Activated B cell treated with CpG ODN at 0.5 μM for 24 hours (primary cell): ENCODE measurements at regions of chr1 and their contacts with region 1.

Region 1: DNA sequence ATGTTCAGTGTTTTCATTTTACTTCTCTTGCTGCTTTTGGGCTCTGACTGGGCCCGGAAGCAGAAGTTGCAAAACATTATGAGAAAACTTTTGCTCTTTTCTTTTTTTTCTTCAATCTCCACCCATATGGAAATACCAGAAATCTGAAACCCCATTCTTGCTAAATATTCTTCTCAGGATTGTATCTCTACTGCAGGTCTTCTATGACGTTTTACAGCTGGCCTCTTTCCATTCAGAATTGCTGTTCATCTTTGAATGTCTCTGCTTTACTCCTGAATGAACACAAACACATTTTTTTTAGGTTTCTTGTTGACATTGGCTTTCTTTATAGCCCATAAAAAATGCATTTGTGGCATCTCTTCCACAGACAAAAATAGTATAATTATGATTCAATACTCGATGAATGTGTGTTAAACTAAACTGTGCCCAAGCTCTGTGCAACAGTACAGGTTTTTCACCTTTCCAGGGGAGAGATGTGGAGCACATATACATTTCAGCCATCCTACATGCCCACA is 18.8 kb downstream of the PTPRC start:
- DNase-seq: no peak
- ATAC-seq: peak; percentile 57
- H3K4me3 Mint-ChIP-seq: peak overlapping the region; percentile 56
- H3K27ac Mint-ChIP-seq: peak overlapping the region; percentile 84
- H3K4me1 Mint-ChIP-seq: peaks cover 78% of the 10 kb centered on the region
- H3K27me3 Mint-ChIP-seq: no peaks in the 10 kb centered on the region
- CTCF ChIP-seq: no peak

Region 2: GRCh38 chr1:198187973-198188588 is 469.5 kb before region 1 on chr1:
- CTCF ChIA-PET with region 1: no interaction called
- POLR2A ChIA-PET with region 1: no interaction called
- intact Hi-C with region 1: no loop called
- DNase-seq: no peak
- ATAC-seq: no peak
- H3K4me3 Mint-ChIP-seq: no peak overlapping the region
- H3K27ac Mint-ChIP-seq: no peak overlapping the region
- H3K4me1 Mint-ChIP-seq: peaks cover 65% of the 10 kb centered on the region
- H3K27me3 Mint-ChIP-seq: no peaks in the 10 kb centered on the region
- CTCF ChIP-seq: no peak

Region 3: GRCh38 chr1:198387587-198387986 is 270.0 kb before region 1 on chr1:
- CTCF ChIA-PET with region 1: no interaction called
- POLR2A ChIA-PET with region 1: no interaction called
- intact Hi-C with region 1: no loop called
- DNase-seq: no peak
- ATAC-seq: no peak
- H3K4me3 Mint-ChIP-seq: no peak overlapping the region
- H3K27ac Mint-ChIP-seq: no peak overlapping the region
- H3K4me1 Mint-ChIP-seq: no peaks in the 10 kb centered on the region
- H3K27me3 Mint-ChIP-seq: peaks cover 6% of the 10 kb centered on the region
- CTCF ChIP-seq: no peak

Region 4: DNA sequence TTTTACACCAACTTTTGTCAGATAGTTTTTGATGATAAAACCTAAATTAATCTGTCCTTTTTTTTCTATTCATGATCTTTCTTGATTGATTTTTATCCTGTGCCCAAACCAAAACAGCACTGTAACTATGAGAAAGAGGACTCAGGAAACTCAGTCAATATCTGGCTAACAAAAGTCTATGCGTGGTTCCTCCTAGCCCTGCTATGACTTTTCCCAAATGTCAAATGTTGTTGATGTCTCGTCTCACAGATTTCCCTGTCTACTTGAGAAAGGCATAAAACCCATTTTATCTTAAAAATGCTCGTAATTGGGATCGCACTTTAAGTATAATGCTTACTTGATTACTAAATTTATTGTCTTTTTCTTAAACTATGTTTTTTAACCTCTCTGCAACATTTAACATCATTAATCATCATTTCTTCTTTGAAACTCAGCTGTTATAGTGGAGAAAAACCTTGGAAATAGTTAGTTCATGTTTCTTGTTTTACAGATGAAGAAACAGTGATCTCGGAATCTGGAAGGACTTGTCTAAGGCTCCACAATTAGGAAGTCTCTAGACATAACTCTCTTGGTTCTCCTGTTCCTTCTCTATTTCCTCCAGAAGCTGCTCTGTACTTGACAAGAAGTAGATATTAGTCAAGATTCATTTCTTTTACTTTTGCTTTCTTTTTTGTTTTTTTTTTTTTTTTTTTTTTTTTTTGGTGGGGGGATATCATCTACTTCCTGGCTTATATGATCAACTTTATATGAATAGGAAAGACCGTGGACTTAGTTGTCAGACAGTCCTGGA is 44.9 kb before region 1 on chr1:
- CTCF ChIA-PET with region 1: no interaction called
- POLR2A ChIA-PET with region 1: interaction called, 15 read pairs
- intact Hi-C with region 1: no loop called
- DNase-seq: no peak
- ATAC-seq: peak; percentile 78
- H3K4me3 Mint-ChIP-seq: peak overlapping the region; percentile 75
- H3K27ac Mint-ChIP-seq: peak overlapping the region; percentile 86
- H3K4me1 Mint-ChIP-seq: peaks cover 58% of the 10 kb centered on the region
- H3K27me3 Mint-ChIP-seq: no peaks in the 10 kb centered on the region
- CTCF ChIP-seq: no peak

Region 5: GRCh38 chr1:198669023-198669698 is 11.6 kb after region 1 on chr1:
- CTCF ChIA-PET with region 1: no interaction called
- POLR2A ChIA-PET with region 1: interaction called, 28 read pairs
- intact Hi-C with region 1: loop called (anchors 1 kb)
- DNase-seq: no peak
- ATAC-seq: peak; percentile 57
- H3K4me3 Mint-ChIP-seq: peak overlapping the region; percentile 42
- H3K27ac Mint-ChIP-seq: peak overlapping the region; percentile 88
- H3K4me1 Mint-ChIP-seq: peaks cover 89% of the 10 kb centered on the region
- H3K27me3 Mint-ChIP-seq: no peaks in the 10 kb centered on the region
- CTCF ChIP-seq: no peak